Activated CD4-positive, alpha-beta memory T cell treated with anti-CD3 and anti-CD28 coated beads for 36 hours (primary cell): ENCODE measurements at regions of chr6 and their contacts with region 1.

Region 1: DNA sequence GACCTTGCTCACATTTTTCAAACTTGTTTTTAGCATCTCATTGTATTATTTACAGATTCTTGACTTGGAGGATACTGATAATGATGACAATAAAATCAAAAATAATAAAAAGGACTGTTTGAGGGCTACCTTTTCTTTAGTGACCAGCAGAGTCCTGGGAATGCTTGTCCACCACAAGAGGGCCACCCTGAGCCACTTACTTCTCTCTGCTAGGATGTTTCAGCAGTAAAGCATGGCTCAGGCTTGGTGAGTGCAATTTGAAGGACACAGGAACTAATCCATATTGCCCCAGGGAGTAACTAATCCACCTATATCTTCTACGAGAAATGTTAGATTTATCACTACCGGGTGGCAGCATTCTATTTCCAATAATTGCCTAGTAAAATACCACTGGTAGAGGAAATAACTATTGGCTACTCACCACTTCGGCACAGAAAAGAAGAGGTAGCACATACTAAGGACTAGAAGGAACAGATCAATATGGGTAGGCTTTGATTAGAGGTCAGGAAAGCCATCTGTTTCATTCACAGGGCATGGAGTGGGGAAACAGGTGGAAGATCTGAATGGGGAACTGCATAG is 5.8 kb upstream of the KIAA0408 start:
- DNase-seq: peak; percentile 75
- H3K4me3 Mint-ChIP-seq: no peak overlapping the region
- H3K27ac Mint-ChIP-seq: no peak overlapping the region
- H3K4me1 Mint-ChIP-seq: peaks cover 2% of the 10 kb centered on the region
- H3K27me3 Mint-ChIP-seq: no peaks in the 10 kb centered on the region

Region 2: GRCh38 chr6:127302728-127303660 is 162.0 kb before region 1 on chr6:
- CTCF ChIA-PET with region 1: interaction called, 4 read pairs
- POLR2A ChIA-PET with region 1: no interaction called
- intact Hi-C with region 1: loop called (anchors 2 kb)
- DNase-seq: peak; percentile 41
- H3K4me3 Mint-ChIP-seq: no peak overlapping the region
- H3K27ac Mint-ChIP-seq: peak overlapping the region; percentile 15
- H3K4me1 Mint-ChIP-seq: peaks cover 32% of the 10 kb centered on the region
- H3K27me3 Mint-ChIP-seq: no peaks in the 10 kb centered on the region

Region 3: GRCh38 chr6:127352524-127352923 is 112.4 kb before region 1 on chr6:
- CTCF ChIA-PET with region 1: no interaction called
- POLR2A ChIA-PET with region 1: no interaction called
- intact Hi-C with region 1: no loop called
- DNase-seq: no peak
- H3K4me3 Mint-ChIP-seq: no peak overlapping the region
- H3K27ac Mint-ChIP-seq: no peak overlapping the region
- H3K4me1 Mint-ChIP-seq: no peaks in the 10 kb centered on the region
- H3K27me3 Mint-ChIP-seq: no peaks in the 10 kb centered on the region

Region 4: DNA sequence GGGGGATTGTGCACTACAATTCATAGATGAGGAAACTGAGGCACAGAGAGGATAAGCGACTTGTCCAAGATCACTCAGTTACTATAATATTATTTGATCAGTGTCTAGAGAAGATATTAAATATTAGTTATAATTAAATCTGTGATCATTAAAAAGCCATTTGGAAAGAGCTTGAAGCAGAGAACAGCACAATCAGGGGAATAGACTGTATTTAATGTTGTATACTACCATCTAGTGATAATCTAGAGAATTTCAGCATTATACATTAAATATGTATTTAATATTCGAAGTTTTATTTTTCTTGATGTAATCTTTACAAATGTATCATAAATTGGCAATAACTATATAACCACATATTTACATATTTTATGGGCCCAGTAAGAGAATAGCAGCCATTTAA is 74.3 kb after region 1 on chr6:
- CTCF ChIA-PET with region 1: interaction called, 113 read pairs
- POLR2A ChIA-PET with region 1: no interaction called
- intact Hi-C with region 1: loop called (anchors 1 kb)
- DNase-seq: no peak
- H3K4me3 Mint-ChIP-seq: no peak overlapping the region
- H3K27ac Mint-ChIP-seq: no peak overlapping the region
- H3K4me1 Mint-ChIP-seq: peaks cover 3% of the 10 kb centered on the region
- H3K27me3 Mint-ChIP-seq: peaks cover 13% of the 10 kb centered on the region

Region 5: GRCh38 chr6:127547215-127547614 is 82.2 kb after region 1 on chr6:
- CTCF ChIA-PET with region 1: interaction called, 10 read pairs
- POLR2A ChIA-PET with region 1: no interaction called
- intact Hi-C with region 1: no loop called
- DNase-seq: peak; percentile 39
- H3K4me3 Mint-ChIP-seq: no peak overlapping the region
- H3K27ac Mint-ChIP-seq: no peak overlapping the region
- H3K4me1 Mint-ChIP-seq: no peaks in the 10 kb centered on the region
- H3K27me3 Mint-ChIP-seq: peaks cover 6% of the 10 kb centered on the region

Region 6: GRCh38 chr6:127586372-127586771 is 121.4 kb after region 1 on chr6:
- CTCF ChIA-PET with region 1: no interaction called
- POLR2A ChIA-PET with region 1: no interaction called
- intact Hi-C with region 1: no loop called
- DNase-seq: no peak
- H3K4me3 Mint-ChIP-seq: no peak overlapping the region
- H3K27ac Mint-ChIP-seq: no peak overlapping the region
- H3K4me1 Mint-ChIP-seq: no peaks in the 10 kb centered on the region
- H3K27me3 Mint-ChIP-seq: no peaks in the 10 kb centered on the region

Region 7: DNA sequence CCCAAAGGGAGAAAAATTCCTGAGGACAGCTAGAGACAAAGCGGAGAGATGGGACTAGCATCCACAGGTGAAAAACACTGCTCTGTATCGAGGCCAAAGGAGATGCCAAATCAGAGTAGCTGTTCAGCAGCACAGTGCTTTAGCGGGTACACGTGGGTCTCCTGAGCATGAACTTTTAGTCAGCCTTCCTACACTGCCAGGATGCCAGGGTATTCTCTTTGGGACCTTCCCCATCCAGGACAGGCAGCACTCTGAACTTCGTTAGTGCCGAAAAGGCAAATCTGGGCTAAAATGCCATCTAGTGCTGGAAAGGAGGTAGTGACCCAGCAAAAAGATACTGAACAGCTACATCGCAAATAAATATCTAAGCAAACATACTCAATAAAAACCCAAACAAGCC is 176.9 kb after region 1 on chr6:
- CTCF ChIA-PET with region 1: no interaction called
- POLR2A ChIA-PET with region 1: no interaction called
- intact Hi-C with region 1: loop called (anchors 2 kb)
- DNase-seq: peak; percentile 16
- H3K4me3 Mint-ChIP-seq: no peak overlapping the region
- H3K27ac Mint-ChIP-seq: no peak overlapping the region
- H3K4me1 Mint-ChIP-seq: no peaks in the 10 kb centered on the region
- H3K27me3 Mint-ChIP-seq: no peaks in the 10 kb centered on the region